ENCODE measurements at regions of chr1 and their contacts with region 1.

Region 1: DNA sequence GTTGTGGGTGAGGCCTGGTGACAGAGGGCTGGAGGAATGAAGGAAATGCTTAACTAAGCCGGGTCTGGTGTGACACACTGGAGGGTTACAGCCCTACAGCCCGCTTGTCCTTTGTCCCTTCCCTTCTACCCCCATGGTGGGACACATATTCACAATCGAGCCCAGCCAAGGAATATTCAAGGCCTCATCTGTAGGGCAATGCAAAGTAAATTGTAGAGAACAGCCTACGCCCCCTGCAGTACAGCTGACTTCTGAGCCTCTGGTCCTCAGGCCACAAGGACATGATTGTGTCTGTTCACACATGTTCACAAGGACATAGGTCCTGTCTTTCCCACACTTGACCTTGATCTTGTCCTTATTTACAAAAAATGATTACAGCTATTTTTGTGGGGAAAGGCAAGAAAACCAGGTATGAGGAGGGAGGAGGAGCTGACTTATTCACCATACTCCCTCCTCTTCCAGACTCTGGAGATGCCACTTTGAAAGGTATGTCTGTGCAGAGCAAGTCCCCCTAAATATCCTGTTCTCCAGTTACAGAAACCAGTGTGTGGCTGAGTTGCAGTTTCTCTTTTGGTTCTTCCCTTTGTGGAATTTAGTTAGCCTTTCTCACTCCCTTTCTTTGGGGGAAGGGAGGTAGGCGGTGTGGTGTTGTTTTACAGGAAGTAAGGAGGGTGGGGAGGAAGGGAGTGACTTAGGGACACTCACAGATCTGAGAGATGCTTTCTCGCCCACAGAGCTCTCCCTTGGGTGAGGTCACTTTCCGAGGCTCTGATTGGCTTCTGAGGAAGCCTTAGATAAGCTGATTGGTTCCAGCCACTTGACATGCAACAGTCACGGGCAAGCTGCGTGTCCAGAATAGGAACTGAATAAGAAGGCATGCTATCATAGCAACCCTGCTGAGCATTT is 14.6 kb downstream of the POLR3GL start:
- DNase-seq: peak; percentile 93
- ATAC-seq: peak; percentile 87
- H3K4me3 ChIP-seq: peak overlapping the region; percentile 16 to 52 (median 40)
- H3K4me3 Mint-ChIP-seq: no peak overlapping the region
- H3K27ac ChIP-seq: peak overlapping the region; percentile 96 to 97
- H3K27ac Mint-ChIP-seq: no peak overlapping the region
- H3K4me1 ChIP-seq: peaks cover 70 to 71% of the 10 kb centered on the region in 2 donors
- H3K4me1 Mint-ChIP-seq: peaks cover 30% of the 10 kb centered on the region
- H3K27me3 ChIP-seq: no peaks in the 10 kb centered on the region
- H3K27me3 Mint-ChIP-seq: no peaks in the 10 kb centered on the region
- CTCF ChIP-seq: no peak

Region 2: GRCh38 chr1:145858894-145859490 is 120.1 kb before region 1 on chr1 and contains the start of gene PIAS3:
- CTCF ChIA-PET with region 1: interaction called, 11 read pairs
- POLR2A ChIA-PET with region 1: interaction called, 4 read pairs
- intact Hi-C with region 1: no loop called
- DNase-seq: peak; percentile 91
- ATAC-seq: peak; percentile 85
- H3K4me3 ChIP-seq: peak within 1 kb of the TSS; percentile 74 to 96 (median 94)
- H3K4me3 Mint-ChIP-seq: peak within 1 kb of the TSS; percentile 98
- H3K27ac ChIP-seq: peak within 1 kb of the TSS; percentile 57 to 72
- H3K27ac Mint-ChIP-seq: peak within 1 kb of the TSS; percentile 94
- H3K4me1 ChIP-seq: peaks cover 9 to 14% of the 10 kb centered on the region in 2 donors
- H3K4me1 Mint-ChIP-seq: peaks cover 11% of the 10 kb centered on the region
- H3K27me3 ChIP-seq: peaks cover 0 to 7% (median 1%) of the 10 kb centered on the region in 4 experiments
- H3K27me3 Mint-ChIP-seq: peaks cover 9% of the 10 kb centered on the region
- CTCF ChIP-seq: no peak
- total RNA-seq, gene PIAS3: 45.0 and 51.0 TPM in 2 replicates

Region 3: GRCh38 chr1:145927063-145927886 is 51.8 kb before region 1 on chr1 and contains the start of gene RBM8A:
- CTCF ChIA-PET with region 1: interaction called, 30 read pairs
- POLR2A ChIA-PET with region 1: interaction called, 15 read pairs
- intact Hi-C with region 1: loop called (anchors 1 kb)
- DNase-seq: peak; percentile 98
- ATAC-seq: peak; percentile 98
- H3K4me3 ChIP-seq: peak within 1 kb of the TSS; percentile 71 to 95 (median 83)
- H3K4me3 Mint-ChIP-seq: peak within 1 kb of the TSS; percentile 78
- H3K27ac ChIP-seq: peak within 1 kb of the TSS; percentile 96 to 99
- H3K27ac Mint-ChIP-seq: peak within 1 kb of the TSS; percentile 81
- H3K4me1 ChIP-seq: peaks cover 18 to 30% of the 10 kb centered on the region in 2 donors
- H3K4me1 Mint-ChIP-seq: peaks cover 11% of the 10 kb centered on the region
- H3K27me3 ChIP-seq: no peaks in the 10 kb centered on the region
- H3K27me3 Mint-ChIP-seq: no peaks in the 10 kb centered on the region
- CTCF ChIP-seq: peak; percentile 81
- total RNA-seq, gene RBM8A: 134 and 137 TPM in 2 replicates

Region 4: GRCh38 chr1:145996433-145997015 is 17.4 kb after region 1 on chr1 and contains the start of gene TXNIP:
- CTCF ChIA-PET with region 1: interaction called, 207 read pairs
- POLR2A ChIA-PET with region 1: interaction called, 131 read pairs
- intact Hi-C with region 1: loop called (anchors 1 kb)
- DNase-seq: peak; percentile 89
- ATAC-seq: peak; percentile 72
- H3K4me3 ChIP-seq: peak within 1 kb of the TSS; percentile 81 to 100 (median 95)
- H3K4me3 Mint-ChIP-seq: peak within 1 kb of the TSS; percentile 95
- H3K27ac ChIP-seq: peak within 1 kb of the TSS; percentile 82 to 96
- H3K27ac Mint-ChIP-seq: peak within 1 kb of the TSS; percentile 100
- H3K4me1 ChIP-seq: peaks cover 56 to 67% of the 10 kb centered on the region in 2 donors
- H3K4me1 Mint-ChIP-seq: peaks cover 73% of the 10 kb centered on the region
- H3K27me3 ChIP-seq: no peaks in the 10 kb centered on the region
- H3K27me3 Mint-ChIP-seq: no peaks in the 10 kb centered on the region
- CTCF ChIP-seq: no peak
- total RNA-seq, gene TXNIP: 522 and 542 TPM in 2 replicates

Region 5: DNA sequence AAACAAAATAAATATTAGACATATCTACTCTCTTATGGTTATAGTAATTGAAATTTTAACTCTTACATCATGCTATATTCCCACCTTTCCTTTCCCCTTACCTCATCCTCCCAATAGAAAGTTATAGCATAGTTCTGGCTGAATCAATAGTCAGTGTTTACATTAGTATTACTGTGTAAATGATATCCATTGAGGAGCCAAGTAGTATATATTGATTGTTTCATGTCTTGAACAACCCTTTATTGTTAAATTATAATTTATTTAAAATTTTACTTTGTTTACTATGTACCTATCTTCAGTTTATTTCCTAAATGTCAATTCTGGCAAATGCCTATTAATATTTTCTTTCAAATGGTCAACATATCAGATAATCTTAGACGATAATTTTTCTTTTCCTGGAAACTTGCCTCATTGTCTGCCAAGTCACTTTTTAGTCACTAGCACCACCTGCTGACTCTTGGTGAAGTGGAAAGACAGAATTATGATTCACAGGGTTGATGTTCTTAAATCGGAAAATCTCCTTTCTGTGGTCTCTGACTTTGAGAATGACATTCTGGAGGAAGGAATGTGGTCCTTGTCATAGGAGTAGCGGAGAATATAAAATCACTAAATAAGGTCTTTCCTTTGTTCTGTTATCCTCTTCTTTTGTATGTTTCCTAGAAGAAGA is 33.8 kb after region 1 on chr1:
- CTCF ChIA-PET with region 1: interaction called, 361 read pairs
- POLR2A ChIA-PET with region 1: interaction called, 8 read pairs
- intact Hi-C with region 1: loop called (anchors 1 kb)
- DNase-seq: peak; percentile 82
- ATAC-seq: peak; percentile 51
- H3K4me3 ChIP-seq: no peak overlapping the region
- H3K4me3 Mint-ChIP-seq: no peak overlapping the region
- H3K27ac ChIP-seq: no peak overlapping the region
- H3K27ac Mint-ChIP-seq: no peak overlapping the region
- H3K4me1 ChIP-seq: peaks cover 0 to under 1% of the 10 kb centered on the region in 2 donors
- H3K4me1 Mint-ChIP-seq: peaks cover 2% of the 10 kb centered on the region
- H3K27me3 ChIP-seq: peaks cover 0 to 4% (median 0%) of the 10 kb centered on the region in 4 experiments
- H3K27me3 Mint-ChIP-seq: peaks cover 14% of the 10 kb centered on the region
- CTCF ChIP-seq: peak; percentile 95